MCF 10A (cell line): ENCODE measurements at regions of chr9 and their contacts with region 1.

Region 1: DNA sequence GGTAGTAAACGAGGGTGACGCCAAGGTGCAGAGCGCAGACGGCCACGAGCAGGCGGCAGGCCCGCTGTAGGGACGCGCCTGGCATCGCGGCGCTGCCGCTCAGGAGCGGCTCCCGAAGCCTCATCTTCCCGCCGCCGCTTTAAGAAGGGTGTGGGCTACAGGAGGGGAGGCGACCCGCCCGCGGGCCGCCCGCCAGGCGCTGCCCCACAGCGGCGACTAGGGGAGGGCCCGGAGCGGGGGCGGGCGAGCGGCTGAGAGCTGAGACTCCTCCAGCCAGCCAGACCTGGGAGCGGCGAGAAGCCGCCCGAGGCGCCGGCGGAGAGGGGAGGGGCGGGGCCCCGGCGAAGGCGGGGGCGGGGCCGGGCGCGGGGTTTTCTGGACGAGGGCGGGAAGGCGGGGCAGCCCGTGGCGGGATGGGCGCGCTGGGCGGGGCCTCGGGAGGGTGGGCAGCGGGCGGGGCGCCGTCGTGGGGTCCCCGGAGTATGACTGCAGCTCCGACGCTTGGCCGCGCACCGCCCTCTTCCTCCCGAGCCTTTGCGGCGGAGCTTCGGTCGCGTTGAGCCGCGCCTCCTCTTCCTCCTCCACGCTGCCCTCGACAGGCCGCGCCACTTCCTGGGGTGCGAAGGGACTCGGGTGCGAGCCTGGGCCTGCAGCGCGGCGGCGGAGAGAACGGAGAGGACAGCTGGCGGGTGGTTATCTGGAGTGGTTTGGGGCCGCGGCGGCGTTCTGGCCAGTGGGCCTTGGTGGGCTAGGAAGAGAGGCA is at the start of gene B4GALT1:
- DNase-seq: peak; percentile 96
- H3K4me3 Mint-ChIP-seq: peak within 1 kb of the TSS; percentile 96
- H3K27ac Mint-ChIP-seq: peak within 1 kb of the TSS; percentile 89
- H3K4me1 Mint-ChIP-seq: peaks cover 52% of the 10 kb centered on the region
- H3K27me3 Mint-ChIP-seq: no peaks in the 10 kb centered on the region
- CTCF ChIP-seq: no peak
- total RNA-seq, gene B4GALT1: 155 and 184 TPM in 2 replicates

Region 2: GRCh38 chr9:33116860-33117259 is 50.4 kb before region 1 on chr9:
- CTCF ChIA-PET with region 1: no interaction called
- POLR2A ChIA-PET with region 1: interaction called, 8 read pairs
- intact Hi-C with region 1: loop called (anchors 2 kb)
- DNase-seq: no peak
- H3K4me3 Mint-ChIP-seq: no peak overlapping the region
- H3K27ac Mint-ChIP-seq: peak overlapping the region; percentile 47
- H3K4me1 Mint-ChIP-seq: peaks cover 33% of the 10 kb centered on the region
- H3K27me3 Mint-ChIP-seq: no peaks in the 10 kb centered on the region
- CTCF ChIP-seq: no peak

Region 3: GRCh38 chr9:33151007-33151557 is 16.1 kb before region 1 on chr9:
- CTCF ChIA-PET with region 1: interaction called, 8 read pairs
- POLR2A ChIA-PET with region 1: interaction called, 69 read pairs
- intact Hi-C with region 1: no loop called
- DNase-seq: peak; percentile 76
- H3K4me3 Mint-ChIP-seq: peak overlapping the region; percentile 5
- H3K27ac Mint-ChIP-seq: peak overlapping the region; percentile 76
- H3K4me1 Mint-ChIP-seq: peaks cover 74% of the 10 kb centered on the region
- H3K27me3 Mint-ChIP-seq: no peaks in the 10 kb centered on the region
- CTCF ChIP-seq: no peak

Region 4: GRCh38 chr9:33192493-33193255 is 25.4 kb after region 1 on chr9:
- CTCF ChIA-PET with region 1: no interaction called
- POLR2A ChIA-PET with region 1: interaction called, 57 read pairs
- intact Hi-C with region 1: no loop called
- DNase-seq: no peak
- H3K4me3 Mint-ChIP-seq: no peak overlapping the region
- H3K27ac Mint-ChIP-seq: no peak overlapping the region
- H3K4me1 Mint-ChIP-seq: peaks cover 9% of the 10 kb centered on the region
- H3K27me3 Mint-ChIP-seq: no peaks in the 10 kb centered on the region
- CTCF ChIP-seq: no peak

Region 5: GRCh38 chr9:33233681-33234473 is 66.7 kb after region 1 on chr9:
- CTCF ChIA-PET with region 1: interaction called, 3 read pairs
- POLR2A ChIA-PET with region 1: interaction called, 188 read pairs
- intact Hi-C with region 1: no loop called
- DNase-seq: peak; percentile 100
- H3K4me3 Mint-ChIP-seq: peak overlapping the region; percentile 2
- H3K27ac Mint-ChIP-seq: peak overlapping the region; percentile 97
- H3K4me1 Mint-ChIP-seq: peaks cover 71% of the 10 kb centered on the region
- H3K27me3 Mint-ChIP-seq: no peaks in the 10 kb centered on the region
- CTCF ChIP-seq: no peak